ENCODE measurements at regions of chr4 and their contacts with region 1.

Region 1: GRCh38 chr4:46967631-46968030 is 25.8 kb downstream of the GABRA4 start:
- DNase-seq: no peak
- H3K4me3 ChIP-seq: no peak overlapping the region
- H3K4me3 Mint-ChIP-seq: no peak overlapping the region
- H3K27ac Mint-ChIP-seq: no peak overlapping the region
- H3K4me1 ChIP-seq: no peaks in the 10 kb centered on the region
- H3K4me1 Mint-ChIP-seq: no peaks in the 10 kb centered on the region
- H3K27me3 ChIP-seq: no peaks in the 10 kb centered on the region
- H3K27me3 Mint-ChIP-seq: no peaks in the 10 kb centered on the region
- CTCF ChIP-seq: no peak

Region 2: DNA sequence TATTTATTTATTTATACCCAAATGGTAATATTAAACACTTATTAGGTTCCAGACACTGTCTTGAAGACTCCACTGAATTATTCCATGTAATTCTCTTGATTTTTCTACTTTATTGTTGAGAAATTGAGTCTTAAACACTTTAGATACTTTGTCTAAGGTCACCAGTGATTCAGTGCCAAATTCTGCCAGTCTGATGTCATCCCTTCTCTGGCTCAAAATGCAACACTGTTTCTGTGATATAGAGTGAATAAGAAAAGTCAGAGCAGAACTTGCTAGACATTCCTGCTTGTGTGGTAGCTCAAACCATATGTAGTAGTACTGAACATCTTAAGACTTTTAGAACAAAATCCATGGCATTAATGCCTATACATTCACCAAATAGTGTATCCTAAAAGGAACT is 228.1 kb after region 1 on chr4:
- CTCF ChIA-PET with region 1: no interaction called
- POLR2A ChIA-PET with region 1: no interaction called
- intact Hi-C with region 1: no loop called
- DNase-seq: no peak
- H3K4me3 ChIP-seq: no peak overlapping the region
- H3K4me3 Mint-ChIP-seq: no peak overlapping the region
- H3K27ac Mint-ChIP-seq: no peak overlapping the region
- H3K4me1 ChIP-seq: peaks cover 11% of the 10 kb centered on the region
- H3K4me1 Mint-ChIP-seq: peaks cover 1% of the 10 kb centered on the region
- H3K27me3 ChIP-seq: no peaks in the 10 kb centered on the region
- H3K27me3 Mint-ChIP-seq: no peaks in the 10 kb centered on the region
- CTCF ChIP-seq: no peak

Region 3: DNA sequence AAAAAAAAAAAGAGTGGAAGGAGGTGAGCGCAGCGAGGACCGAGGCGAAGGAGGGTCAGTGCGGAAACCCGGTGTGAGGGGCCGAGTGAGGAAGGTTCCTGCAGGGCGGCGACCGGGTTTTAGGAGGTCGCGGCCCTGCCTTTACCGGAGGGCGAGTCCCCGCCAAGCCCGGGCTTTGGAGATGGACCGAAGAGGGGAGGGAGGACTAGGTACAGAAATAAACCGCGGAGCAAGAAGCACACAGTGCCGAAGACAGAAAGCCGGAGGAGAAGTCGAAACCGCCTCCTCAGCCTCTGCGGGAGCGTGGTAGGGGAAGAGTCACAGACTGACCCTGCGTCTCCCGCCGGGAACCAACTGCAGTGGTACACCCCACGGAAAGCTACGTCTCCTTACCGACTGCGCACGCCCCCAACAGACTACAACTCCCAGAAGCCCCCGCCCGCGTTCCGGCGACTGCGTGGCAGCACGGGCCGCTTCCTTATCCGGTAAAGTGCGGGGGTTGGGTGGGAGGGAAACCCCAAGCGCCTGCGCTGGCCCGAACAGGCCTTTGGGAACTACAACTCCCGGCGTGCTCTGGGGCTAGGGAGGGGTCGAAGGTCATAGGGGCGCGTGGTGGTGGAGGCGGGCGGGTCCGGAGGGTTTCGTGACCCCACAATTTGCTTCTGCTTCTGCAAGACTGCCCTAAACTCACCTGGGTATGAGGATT is 946.7 kb after region 1 on chr4 and contains the start of gene NFXL1:
- CTCF ChIA-PET with region 1: no interaction called
- POLR2A ChIA-PET with region 1: no interaction called
- intact Hi-C with region 1: loop called (anchors 5 kb)
- DNase-seq: peak; percentile 96 to 97
- H3K4me3 ChIP-seq: peak within 1 kb of the TSS; percentile 87
- H3K4me3 Mint-ChIP-seq: peak within 1 kb of the TSS; percentile 87
- H3K27ac Mint-ChIP-seq: peak within 1 kb of the TSS; percentile 90
- H3K4me1 ChIP-seq: peaks cover 7% of the 10 kb centered on the region
- H3K4me1 Mint-ChIP-seq: peaks cover 6% of the 10 kb centered on the region
- H3K27me3 ChIP-seq: no peaks in the 10 kb centered on the region
- H3K27me3 Mint-ChIP-seq: no peaks in the 10 kb centered on the region
- CTCF ChIP-seq: no peak
- total RNA-seq, gene NFXL1: 22.5 and 22.8 TPM in 2 replicates

Measured in Caco-2 (cell line).